ENCODE measurements at regions of chr14 and their contacts with region 1.

Region 1: DNA sequence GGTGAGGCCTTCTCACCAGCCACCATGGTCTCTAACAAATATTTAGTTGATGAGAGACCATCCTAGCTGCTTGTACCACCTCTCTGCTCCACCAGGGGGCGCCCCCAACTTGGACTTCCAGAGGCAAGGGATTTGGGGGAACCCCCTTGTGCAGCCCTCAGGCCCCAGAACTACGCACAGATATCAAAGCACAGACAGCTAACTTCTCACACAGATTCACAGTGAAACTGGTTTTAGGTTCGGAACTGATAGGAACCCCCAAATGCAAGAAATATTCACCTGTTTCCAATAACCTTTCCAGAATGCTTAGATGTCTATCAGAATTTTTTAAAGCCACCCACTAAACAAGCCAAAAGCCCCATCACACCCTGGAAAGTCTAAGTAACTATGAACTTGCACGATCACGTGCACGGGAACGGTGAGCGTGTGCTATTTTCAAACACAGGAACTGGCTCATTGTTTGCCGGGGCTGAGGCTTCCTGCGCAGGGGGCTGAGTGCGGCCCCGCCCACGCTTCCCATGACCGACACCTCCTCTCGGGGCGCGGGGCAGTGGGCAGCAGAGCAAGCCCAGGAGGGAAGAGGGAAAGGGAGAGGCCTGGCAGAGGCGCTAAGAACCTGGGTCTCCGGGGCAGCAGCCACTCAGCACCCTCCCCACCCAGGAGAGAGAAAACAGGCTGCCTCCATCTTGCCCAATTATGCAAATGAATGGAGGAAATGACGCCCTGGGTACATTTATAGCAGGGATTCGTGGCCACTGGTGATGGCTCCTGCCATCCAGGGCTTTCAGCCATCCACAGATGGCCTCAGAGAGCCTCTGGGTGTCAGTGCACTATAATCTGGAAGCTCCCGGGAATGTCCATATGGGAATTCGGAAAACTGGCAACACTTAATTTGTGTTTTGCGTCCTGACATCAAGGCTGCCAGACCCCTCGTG is 79.4 kb upstream of the GPR68 start:
- DNase-seq: peak; percentile 95
- ATAC-seq: peak; percentile 78
- H3K4me3 ChIP-seq: peak overlapping the region; percentile 34 to 55 (median 45)
- H3K4me3 Mint-ChIP-seq: peak overlapping the region; percentile 93
- H3K27ac ChIP-seq: peak overlapping the region; percentile 99
- H3K27ac Mint-ChIP-seq: peak overlapping the region; percentile 100
- H3K4me1 ChIP-seq: peaks cover 43 to 57% of the 10 kb centered on the region in 2 donors
- H3K4me1 Mint-ChIP-seq: peaks cover 54% of the 10 kb centered on the region
- H3K27me3 ChIP-seq: no peaks in the 10 kb centered on the region
- H3K27me3 Mint-ChIP-seq: no peaks in the 10 kb centered on the region
- CTCF ChIP-seq: peak; percentile 95

Region 2: DNA sequence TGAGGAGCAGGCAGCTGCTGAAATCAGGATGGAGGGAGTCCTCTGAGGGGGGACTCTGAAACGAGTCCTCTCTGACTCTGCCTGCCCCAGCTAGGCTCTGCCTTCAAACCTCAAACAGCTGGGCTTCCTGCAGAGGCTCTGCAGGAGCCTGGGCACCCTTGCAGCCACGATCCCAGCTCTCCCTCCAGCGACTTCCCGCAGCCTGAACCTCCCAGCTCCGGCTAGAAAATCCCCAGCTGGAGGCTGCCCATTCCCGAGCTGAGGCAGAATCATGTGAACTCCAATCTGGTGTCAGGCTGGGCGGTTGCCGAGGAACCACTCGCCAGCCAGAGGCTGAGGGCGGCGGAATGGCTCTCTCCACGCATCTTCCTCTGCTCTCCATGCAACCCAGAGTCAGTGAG is 79.4 kb before region 1 on chr14 and contains the start of gene GPR68:
- CTCF ChIA-PET with region 1: interaction called, 3 read pairs
- POLR2A ChIA-PET with region 1: no interaction called
- intact Hi-C with region 1: loop called (anchors 2 kb)
- DNase-seq: no peak
- ATAC-seq: no peak
- H3K4me3 ChIP-seq: peak within 1 kb of the TSS in 2 of 5 experiments; percentile 30 to 37
- H3K4me3 Mint-ChIP-seq: peak within 1 kb of the TSS; percentile 75
- H3K27ac ChIP-seq: peak within 1 kb of the TSS; percentile 57 to 79
- H3K27ac Mint-ChIP-seq: peak within 1 kb of the TSS; percentile 91
- H3K4me1 ChIP-seq: peaks cover 46 to 55% of the 10 kb centered on the region in 2 donors
- H3K4me1 Mint-ChIP-seq: peaks cover 62% of the 10 kb centered on the region
- H3K27me3 ChIP-seq: no peaks in the 10 kb centered on the region
- H3K27me3 Mint-ChIP-seq: no peaks in the 10 kb centered on the region
- CTCF ChIP-seq: no peak
- total RNA-seq, gene GPR68: 0.34 and 0.53 TPM in 2 replicates

Region 3: GRCh38 chr14:91367173-91368171 is 43.5 kb after region 1 on chr14:
- CTCF ChIA-PET with region 1: interaction called, 31 read pairs
- POLR2A ChIA-PET with region 1: interaction called, 10 read pairs
- intact Hi-C with region 1: loop called (anchors 1 kb)
- DNase-seq: peak; percentile 97
- ATAC-seq: peak; percentile 77
- H3K4me3 ChIP-seq: peak overlapping the region in 1 of 5 experiments; percentile 13
- H3K4me3 Mint-ChIP-seq: peak overlapping the region; percentile 84
- H3K27ac ChIP-seq: peak overlapping the region; percentile 88 to 98
- H3K27ac Mint-ChIP-seq: peak overlapping the region; percentile 98
- H3K4me1 ChIP-seq: peaks cover 78 to 94% of the 10 kb centered on the region in 2 donors
- H3K4me1 Mint-ChIP-seq: peaks cover 89% of the 10 kb centered on the region
- H3K27me3 ChIP-seq: no peaks in the 10 kb centered on the region
- H3K27me3 Mint-ChIP-seq: no peaks in the 10 kb centered on the region
- CTCF ChIP-seq: no peak

Region 4: DNA sequence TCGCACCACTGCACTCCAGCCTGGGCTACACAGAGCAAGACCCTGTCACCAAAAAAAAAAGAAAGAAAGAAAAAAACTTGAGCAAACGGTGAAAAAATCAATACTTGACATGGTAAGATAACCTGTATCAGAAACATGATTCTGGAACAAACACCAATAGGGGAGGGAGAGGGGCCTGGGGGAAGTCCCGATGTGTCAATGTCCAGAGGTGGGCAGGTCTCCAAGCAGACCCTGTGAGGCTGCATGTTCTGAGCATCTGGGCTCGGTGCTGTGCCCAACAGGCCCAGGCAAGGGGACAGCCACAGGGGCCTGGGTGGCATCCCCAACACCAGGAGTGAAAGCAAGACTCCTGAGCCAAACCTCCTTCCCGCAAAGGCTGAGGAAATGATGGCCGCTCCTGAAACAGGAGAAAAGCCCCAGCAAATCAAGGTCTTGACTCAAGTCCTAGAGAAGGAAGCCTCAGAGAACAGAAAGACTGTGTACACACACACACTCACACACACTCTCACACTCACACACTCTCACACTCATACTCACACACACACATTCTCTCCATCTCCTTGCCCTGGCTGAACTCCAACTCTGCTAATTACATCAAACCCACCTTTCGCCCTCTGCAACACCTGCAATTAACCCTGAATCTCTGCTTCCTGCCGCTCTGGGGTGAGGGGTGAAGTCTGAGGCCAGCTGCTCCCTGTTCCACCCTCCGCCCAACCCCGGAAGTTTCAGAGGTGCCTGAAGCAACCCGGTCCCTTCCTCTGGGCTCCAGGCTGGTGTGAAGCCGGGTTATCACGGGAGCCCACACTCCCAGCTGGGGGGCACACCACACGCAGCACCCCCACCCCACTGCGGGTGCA is 73.2 kb after region 1 on chr14:
- CTCF ChIA-PET with region 1: interaction called, 33 read pairs
- POLR2A ChIA-PET with region 1: no interaction called
- intact Hi-C with region 1: no loop called
- DNase-seq: peak; percentile 50
- ATAC-seq: peak; percentile 55
- H3K4me3 ChIP-seq: peak overlapping the region in 4 of 5 experiments; percentile 1 to 52 (median 14)
- H3K4me3 Mint-ChIP-seq: peak overlapping the region; percentile 78
- H3K27ac ChIP-seq: peak overlapping the region; percentile 67 to 81
- H3K27ac Mint-ChIP-seq: peak overlapping the region; percentile 86
- H3K4me1 ChIP-seq: peaks cover 87% of the 10 kb centered on the region in 2 donors
- H3K4me1 Mint-ChIP-seq: peaks cover 91% of the 10 kb centered on the region
- H3K27me3 ChIP-seq: no peaks in the 10 kb centered on the region
- H3K27me3 Mint-ChIP-seq: no peaks in the 10 kb centered on the region
- CTCF ChIP-seq: no peak

Region 5: GRCh38 chr14:91510174-91511042 is 186.5 kb after region 1 on chr14 and contains the start of gene PPP4R3A:
- CTCF ChIA-PET with region 1: no interaction called
- POLR2A ChIA-PET with region 1: interaction called, 3 read pairs
- intact Hi-C with region 1: loop called (anchors 2 kb)
- DNase-seq: peak; percentile 97
- ATAC-seq: peak; percentile 87
- H3K4me3 ChIP-seq: peak within 1 kb of the TSS; percentile 72 to 99 (median 84)
- H3K4me3 Mint-ChIP-seq: peak within 1 kb of the TSS; percentile 99
- H3K27ac ChIP-seq: peak within 1 kb of the TSS; percentile 97 to 100
- H3K27ac Mint-ChIP-seq: peak within 1 kb of the TSS; percentile 100
- H3K4me1 ChIP-seq: peaks cover 32% of the 10 kb centered on the region in 2 donors
- H3K4me1 Mint-ChIP-seq: peaks cover 37% of the 10 kb centered on the region
- H3K27me3 ChIP-seq: no peaks in the 10 kb centered on the region
- H3K27me3 Mint-ChIP-seq: no peaks in the 10 kb centered on the region
- CTCF ChIP-seq: no peak
- total RNA-seq, gene PPP4R3A: 184 and 189 TPM in 2 replicates